ENCODE measurements at regions of chr4 and their contacts with region 1.

Region 1: DNA sequence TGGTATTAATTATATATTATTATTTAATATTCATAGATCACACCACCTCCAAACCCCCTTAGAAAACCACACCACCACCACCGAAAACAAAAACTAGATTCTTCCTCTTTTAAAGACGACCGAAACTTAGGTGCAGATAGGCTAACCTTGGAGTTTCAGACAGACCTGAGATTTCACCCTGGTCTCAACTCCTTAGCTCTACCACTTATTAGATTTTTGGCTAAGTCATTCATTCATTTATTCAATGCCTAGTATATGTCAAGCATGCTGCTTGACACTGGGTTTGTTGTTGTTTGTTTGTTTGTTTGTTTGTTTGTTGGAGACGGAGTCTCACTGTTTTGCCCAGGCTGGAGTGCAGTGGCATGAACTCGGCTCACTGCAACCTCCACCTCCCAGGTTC is 9.5 kb upstream of the BMP2K start:
- DNase-seq: no peak
- ATAC-seq: peak; percentile 94
- H3K4me3 Mint-ChIP-seq: peak overlapping the region; percentile 68
- H3K27ac Mint-ChIP-seq: peak overlapping the region; percentile 84
- H3K4me1 Mint-ChIP-seq: peaks cover 33% of the 10 kb centered on the region
- H3K27me3 Mint-ChIP-seq: no peaks in the 10 kb centered on the region
- CTCF ChIP-seq: no peak

Region 2: DNA sequence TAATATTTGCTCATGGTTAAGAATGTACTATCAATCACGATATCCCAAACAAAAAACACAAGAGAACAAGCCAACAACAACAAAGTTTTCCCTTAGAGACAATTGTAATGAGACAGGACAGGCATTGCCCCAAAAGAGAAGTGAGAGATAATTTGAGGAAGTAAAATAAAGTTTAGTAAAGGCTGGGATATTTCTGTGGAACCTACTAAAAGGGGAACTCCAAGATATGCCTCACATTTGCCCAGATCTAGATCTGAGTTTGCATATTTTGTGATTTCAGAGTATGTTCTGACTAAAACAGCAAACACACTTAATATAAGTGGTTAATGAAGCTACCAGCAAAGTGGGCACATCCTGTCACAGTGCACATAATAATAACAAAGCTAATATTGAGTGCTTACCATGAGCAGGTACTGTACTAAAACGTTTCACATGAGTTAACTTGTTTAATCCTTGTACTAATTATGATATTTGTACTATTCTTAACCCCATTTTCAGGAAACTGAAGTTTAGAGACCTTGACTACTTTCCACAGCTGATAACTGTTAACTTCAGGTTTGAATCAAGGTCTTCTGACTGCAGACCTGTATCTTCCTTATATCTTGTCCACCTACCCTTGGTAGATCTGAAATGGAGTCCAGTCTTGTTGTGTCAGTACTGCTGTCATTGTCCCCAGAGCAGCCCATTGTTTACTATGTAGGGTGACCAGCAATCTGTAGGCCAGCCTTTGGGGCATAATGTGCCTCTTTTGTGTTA is 16.5 kb before region 1 on chr4:
- CTCF ChIA-PET with region 1: interaction called, 4 read pairs
- POLR2A ChIA-PET with region 1: interaction called, 41 read pairs
- intact Hi-C with region 1: loop called (anchors 1 kb)
- DNase-seq: no peak
- ATAC-seq: peak; percentile 83
- H3K4me3 Mint-ChIP-seq: peak overlapping the region; percentile 74
- H3K27ac Mint-ChIP-seq: peak overlapping the region; percentile 93
- H3K4me1 Mint-ChIP-seq: peaks cover 72% of the 10 kb centered on the region
- H3K27me3 Mint-ChIP-seq: no peaks in the 10 kb centered on the region
- CTCF ChIP-seq: no peak

Region 3: DNA sequence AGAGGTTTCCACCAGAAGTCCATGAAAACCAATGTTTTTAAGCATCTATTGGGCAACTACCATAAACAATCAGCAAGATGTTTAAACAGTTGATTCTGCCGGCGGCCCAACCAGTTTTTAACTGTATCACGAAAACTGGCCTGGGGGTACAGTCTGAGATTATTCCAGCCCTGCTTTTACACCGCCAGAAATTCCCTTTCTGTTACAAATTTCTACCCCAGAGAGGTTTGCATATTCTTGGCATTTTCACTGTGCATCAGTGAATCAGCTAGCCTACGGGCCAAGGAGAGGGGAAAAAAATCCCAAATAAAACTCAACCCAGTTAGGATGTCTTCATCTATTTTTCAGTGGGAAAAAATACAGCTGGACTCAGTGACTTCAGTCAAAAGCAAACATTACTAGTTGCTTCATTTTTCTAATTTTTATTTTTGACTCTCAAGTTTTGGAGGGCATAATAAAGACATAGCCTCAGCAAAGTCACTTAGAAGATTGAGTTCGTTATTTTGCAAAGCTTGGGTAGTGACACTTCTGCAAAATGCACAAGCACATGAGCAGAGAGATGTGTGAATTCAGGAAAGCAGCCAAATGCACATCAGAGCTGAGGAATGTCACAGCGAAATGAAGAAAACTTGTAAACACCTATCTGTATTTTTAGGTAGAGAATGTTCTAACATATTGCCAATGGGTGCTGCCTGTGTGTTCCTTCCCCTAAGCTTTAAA is 809.2 kb after region 1 on chr4:
- CTCF ChIA-PET with region 1: no interaction called
- POLR2A ChIA-PET with region 1: no interaction called
- intact Hi-C with region 1: no loop called
- DNase-seq: no peak
- ATAC-seq: no peak
- H3K4me3 Mint-ChIP-seq: no peak overlapping the region
- H3K27ac Mint-ChIP-seq: no peak overlapping the region
- H3K4me1 Mint-ChIP-seq: no peaks in the 10 kb centered on the region
- H3K27me3 Mint-ChIP-seq: peaks cover 3% of the 10 kb centered on the region
- CTCF ChIP-seq: no peak

Measured in activated B cell treated with CpG ODN at 0.5 μM for 24 hours (primary cell).